Activated naive CD8-positive, alpha-beta T cell treated with anti-CD3 and anti-CD28 coated beads, Interleukin-2, amount 10 ng/mL, durations not matched to agents 7 days and 5 days (primary cell): ENCODE measurements at regions of chr1 and their contacts with region 1.

Region 1: DNA sequence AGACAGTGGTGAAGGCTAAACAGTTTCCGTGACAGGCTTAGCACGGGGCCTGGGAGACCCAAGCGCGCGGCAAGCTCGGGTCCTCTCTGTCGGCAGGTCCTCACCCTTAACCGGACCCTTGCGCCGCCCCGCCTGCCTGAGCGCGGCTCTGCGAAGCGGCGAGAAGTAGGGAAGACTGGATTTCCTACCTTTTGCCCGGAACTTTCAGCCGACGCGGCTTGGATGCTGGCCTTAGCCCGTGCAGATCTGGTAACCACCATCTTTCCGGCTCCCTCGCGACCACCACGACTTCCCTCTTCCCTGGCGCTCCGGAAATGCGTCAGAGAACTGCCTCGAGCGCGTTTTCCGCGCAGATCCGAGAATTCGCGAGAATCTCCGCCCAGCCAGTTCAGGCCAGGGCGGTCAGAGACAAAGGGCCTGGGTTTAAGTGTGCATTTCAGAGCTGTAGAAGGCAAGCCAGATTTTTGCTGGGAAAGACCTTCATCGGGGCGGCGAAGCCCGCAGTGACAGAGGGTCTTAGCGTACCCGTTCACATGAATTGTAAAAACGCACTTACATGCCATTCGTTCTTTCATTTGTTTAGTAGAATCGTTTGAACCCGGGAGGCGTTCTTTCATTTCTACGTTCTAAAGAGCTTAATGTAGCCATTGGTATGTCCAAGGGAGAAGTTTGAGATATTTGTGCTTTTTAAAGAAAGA is at the start of gene DNTTIP2:
- DNase-seq: peak; percentile 87
- ATAC-seq: peak; percentile 94
- H3K4me3 Mint-ChIP-seq: peak within 1 kb of the TSS; percentile 93
- H3K27ac Mint-ChIP-seq: peak within 1 kb of the TSS; percentile 97
- H3K4me1 Mint-ChIP-seq: peaks cover 24% of the 10 kb centered on the region
- H3K27me3 Mint-ChIP-seq: no peaks in the 10 kb centered on the region
- total RNA-seq, gene DNTTIP2: 55.1 to 61.3 TPM

Region 2: GRCh38 chr1:93345633-93346420 is 533.2 kb before region 1 on chr1 and contains the start of gene DR1:
- POLR2A ChIA-PET with region 1: interaction called, 13 read pairs
- DNase-seq: peak; percentile 94
- ATAC-seq: peak; percentile 74
- H3K4me3 Mint-ChIP-seq: peak within 1 kb of the TSS; percentile 96
- H3K27ac Mint-ChIP-seq: peak within 1 kb of the TSS; percentile 96
- H3K4me1 Mint-ChIP-seq: peaks cover 24% of the 10 kb centered on the region
- H3K27me3 Mint-ChIP-seq: no peaks in the 10 kb centered on the region
- total RNA-seq, gene DR1: 84.2 to 85.7 TPM

Region 3: DNA sequence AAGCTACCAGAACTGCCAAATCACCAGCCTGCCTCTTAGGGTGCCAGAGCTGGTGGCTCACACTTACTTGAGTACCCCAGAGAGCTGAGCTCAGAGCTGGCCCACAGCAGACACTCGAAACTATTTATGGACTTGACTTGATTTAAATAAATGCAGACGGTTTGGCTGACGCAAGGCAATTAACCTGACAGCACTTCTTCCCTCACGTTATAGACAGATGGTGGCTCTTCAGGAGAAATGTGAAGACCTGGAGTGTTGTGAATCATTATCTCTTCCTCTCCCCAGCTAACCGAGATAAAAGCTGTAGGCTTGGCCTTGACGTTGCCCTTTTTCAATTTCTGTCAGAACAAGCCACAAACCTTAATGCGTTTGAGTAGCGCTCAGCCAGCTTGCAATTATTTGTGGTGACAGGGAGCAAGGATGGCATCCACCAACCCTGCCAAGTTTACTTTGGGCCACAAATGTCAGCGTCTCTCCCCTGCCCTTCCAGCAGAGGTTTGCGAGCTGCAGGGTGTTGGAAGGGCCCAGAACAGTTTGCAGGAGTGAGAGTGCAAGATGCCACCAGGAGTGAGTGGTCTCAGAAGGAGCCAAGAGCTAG is 163.4 kb before region 1 on chr1:
- POLR2A ChIA-PET with region 1: no interaction called
- DNase-seq: no peak
- ATAC-seq: no peak
- H3K4me3 Mint-ChIP-seq: no peak overlapping the region
- H3K27ac Mint-ChIP-seq: no peak overlapping the region
- H3K4me1 Mint-ChIP-seq: peaks cover 20% of the 10 kb centered on the region
- H3K27me3 Mint-ChIP-seq: peaks cover 8% of the 10 kb centered on the region

Region 4: DNA sequence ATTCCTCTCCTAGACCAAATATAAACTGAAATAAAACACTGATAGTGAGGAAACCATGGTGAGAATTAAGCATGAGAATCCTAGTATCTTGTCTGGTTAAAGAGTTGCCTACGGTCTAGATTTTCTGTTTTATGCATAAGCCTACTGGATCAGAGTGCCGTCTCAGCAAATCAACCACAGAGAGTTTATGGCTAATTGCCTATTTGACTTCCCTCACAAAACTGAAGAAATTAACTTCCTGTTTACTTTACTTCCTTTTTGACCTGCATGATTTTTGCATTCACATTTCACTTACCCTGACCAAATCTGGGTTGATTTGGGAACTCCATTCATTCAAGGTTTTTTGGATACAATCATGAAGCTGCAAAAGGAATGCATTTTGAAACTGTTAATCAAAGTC is 25.2 kb after region 1 on chr1:
- POLR2A ChIA-PET with region 1: interaction called, 21 read pairs
- DNase-seq: no peak
- ATAC-seq: no peak
- H3K4me3 Mint-ChIP-seq: peak overlapping the region; percentile 25
- H3K27ac Mint-ChIP-seq: peak overlapping the region; percentile 26
- H3K4me1 Mint-ChIP-seq: peaks cover 31% of the 10 kb centered on the region
- H3K27me3 Mint-ChIP-seq: no peaks in the 10 kb centered on the region

Region 5: DNA sequence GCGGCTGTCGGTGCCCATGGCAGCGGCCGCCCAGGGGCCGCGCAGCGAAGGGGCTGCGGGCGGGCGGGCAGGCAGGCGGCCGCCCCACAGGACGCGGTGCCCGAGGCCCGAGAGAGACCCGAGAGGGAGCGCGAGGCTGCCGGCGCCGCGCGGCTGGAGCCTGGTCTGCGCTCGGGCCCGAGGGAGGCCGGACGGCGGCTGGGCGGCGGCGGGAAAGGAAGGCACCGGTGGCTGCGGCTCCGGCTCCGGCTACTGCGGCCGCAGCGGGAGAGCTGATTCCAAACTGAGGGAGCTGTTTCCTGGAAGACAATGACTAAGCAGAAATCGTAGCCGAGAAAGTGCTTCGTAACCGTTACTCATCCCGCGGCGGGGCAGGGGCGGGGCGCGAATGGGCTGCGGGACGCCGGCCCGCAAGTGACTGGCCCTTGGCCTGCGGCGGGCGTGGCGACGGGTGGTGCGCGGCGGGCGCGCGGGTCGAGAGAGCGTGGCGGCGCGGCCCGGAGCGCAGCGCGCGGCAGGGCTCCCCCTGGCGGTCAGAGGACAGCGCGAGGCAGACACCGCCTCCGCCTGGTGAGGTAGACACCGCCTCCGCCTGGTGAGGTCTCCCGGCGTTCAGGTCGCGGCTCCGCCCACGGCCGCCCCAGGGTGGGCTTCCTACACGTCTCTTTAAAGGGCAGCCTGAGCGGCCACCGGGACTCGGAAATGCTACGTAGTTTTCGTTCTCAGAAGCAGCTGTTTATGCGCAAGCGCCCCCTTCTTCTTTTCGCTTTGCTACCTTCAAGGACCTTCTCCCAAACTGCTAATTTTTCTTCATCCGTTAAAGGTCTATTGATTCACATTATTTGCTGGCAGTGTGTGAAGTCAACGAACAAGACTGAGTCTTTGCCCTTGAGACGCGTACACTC is 30.4 kb after region 1 on chr1 and contains the start of gene GCLM:
- POLR2A ChIA-PET with region 1: interaction called, 21 read pairs
- DNase-seq: peak; percentile 96
- ATAC-seq: peak; percentile 93
- H3K4me3 Mint-ChIP-seq: peak within 1 kb of the TSS; percentile 91
- H3K27ac Mint-ChIP-seq: peak within 1 kb of the TSS; percentile 88
- H3K4me1 Mint-ChIP-seq: peaks cover 31% of the 10 kb centered on the region
- H3K27me3 Mint-ChIP-seq: peaks cover 14% of the 10 kb centered on the region
- total RNA-seq, gene GCLM: 20.4 to 22.0 TPM